ENCODE measurements at regions of chr3 and their contacts with region 1.

Region 1: DNA sequence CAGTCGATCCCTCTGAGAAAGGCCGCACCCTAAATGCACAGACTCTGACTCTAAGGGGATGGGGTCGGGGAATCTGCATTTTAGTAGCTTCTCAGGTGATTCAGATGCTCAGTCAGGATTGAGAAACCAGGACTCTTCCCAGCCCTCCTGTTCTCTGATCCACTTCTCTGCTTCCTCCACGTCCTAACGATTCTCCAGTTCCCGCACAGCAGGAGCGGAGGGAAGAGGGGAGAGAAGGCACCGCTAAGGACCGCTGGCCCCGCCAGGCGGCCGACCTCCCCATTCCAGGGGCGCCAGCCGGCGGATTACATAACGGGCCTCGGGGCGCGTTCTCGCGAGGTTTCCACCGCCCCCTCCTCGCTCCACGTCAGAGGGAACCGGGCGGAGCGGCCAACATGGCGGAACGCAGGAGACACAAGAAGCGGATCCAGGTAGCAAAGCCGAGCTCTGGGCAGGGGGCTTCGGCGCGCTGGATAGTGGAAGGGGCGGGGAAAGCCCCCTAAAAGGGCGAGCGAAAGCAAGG is at the start of gene SEC62:
- DNase-seq: peak; percentile 92
- ATAC-seq: peak; percentile 89
- H3K4me3 ChIP-seq: peak within 1 kb of the TSS; percentile 75
- H3K27ac ChIP-seq: peak within 1 kb of the TSS; percentile 15
- H3K4me1 ChIP-seq: peaks cover 15% of the 10 kb centered on the region
- H3K27me3 ChIP-seq: no peaks in the 10 kb centered on the region
- CTCF ChIP-seq: peak; percentile 53
- total RNA-seq, gene SEC62: 29.0 and 31.8 TPM in 2 replicates

Region 2: DNA sequence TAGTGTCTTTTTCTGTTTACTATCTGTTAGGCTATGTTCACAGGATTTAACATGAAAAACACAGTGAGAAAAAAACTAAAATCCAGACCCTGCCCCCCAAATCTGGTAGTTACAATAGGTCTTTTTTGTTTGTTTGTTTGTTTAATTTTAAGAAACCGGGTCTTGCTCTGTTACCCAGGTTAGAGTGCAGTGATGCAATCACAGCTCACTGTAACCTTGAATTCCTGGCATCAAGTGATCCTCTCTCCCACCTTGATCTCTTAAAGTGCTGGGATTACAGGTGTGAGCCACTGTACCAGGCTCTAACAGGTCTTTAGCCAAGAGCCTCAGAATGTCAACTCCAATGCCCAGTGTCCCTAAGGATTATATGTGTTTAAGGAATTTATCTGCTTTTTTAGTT is 1782.7 kb before region 1 on chr3:
- CTCF ChIA-PET with region 1: no interaction called
- POLR2A ChIA-PET with region 1: interaction called, 20 read pairs
- intact Hi-C with region 1: no loop called
- DNase-seq: no peak
- ATAC-seq: no peak
- H3K4me3 ChIP-seq: no peak overlapping the region
- H3K27ac ChIP-seq: no peak overlapping the region
- H3K4me1 ChIP-seq: no peaks in the 10 kb centered on the region
- H3K27me3 ChIP-seq: no peaks in the 10 kb centered on the region
- CTCF ChIP-seq: no peak

Region 3: DNA sequence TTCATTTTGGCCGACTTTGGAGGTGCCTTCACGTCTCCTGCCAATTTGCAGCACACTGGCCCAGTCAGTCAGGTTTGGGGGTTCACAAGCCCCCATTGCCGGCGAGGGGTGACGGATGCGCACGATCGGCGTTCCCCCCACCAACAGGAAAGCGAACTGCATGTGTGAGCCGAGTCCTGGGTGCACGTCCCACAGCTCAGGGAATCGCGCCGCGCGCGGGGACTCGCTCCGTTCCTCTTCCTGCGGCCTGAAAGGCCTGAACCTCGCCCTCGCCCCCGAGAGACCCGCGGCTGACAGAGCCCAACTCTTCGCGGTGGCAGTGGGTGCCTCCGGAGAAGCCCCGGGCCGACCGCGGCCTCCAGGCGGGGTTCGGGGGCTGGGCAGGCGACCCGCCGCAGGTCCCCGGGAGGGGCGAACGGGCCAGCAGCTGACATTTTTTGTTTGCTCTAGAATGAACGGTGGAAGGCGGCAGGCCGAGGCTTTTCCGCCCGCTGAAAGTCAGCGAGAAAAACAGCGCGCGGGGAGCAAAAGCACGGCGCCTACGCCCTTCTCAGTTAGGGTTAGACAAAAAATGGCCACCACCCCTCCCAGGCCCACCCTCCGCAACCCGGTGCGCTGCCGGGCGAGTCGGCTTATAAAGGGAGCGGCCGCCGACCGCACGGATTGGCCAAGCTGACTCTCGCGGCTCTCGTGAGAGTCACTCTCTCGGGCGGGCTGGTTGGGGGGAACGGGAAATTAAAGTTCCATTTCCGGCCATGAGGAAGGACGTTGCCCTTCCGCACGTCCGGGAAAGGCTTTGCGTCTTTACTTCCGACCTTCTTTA is 201.8 kb before region 1 on chr3 and contains the start of gene TERC:
- CTCF ChIA-PET with region 1: no interaction called
- POLR2A ChIA-PET with region 1: no interaction called
- intact Hi-C with region 1: loop called (anchors 2 kb)
- DNase-seq: peak; percentile 97
- ATAC-seq: peak; percentile 85
- H3K4me3 ChIP-seq: peak within 1 kb of the TSS; percentile 81
- H3K27ac ChIP-seq: peak within 1 kb of the TSS; percentile 82
- H3K4me1 ChIP-seq: peaks cover 9% of the 10 kb centered on the region
- H3K27me3 ChIP-seq: no peaks in the 10 kb centered on the region
- CTCF ChIP-seq: no peak
- total RNA-seq, gene TERC: 544 and 737 TPM in 2 replicates

Region 4: GRCh38 chr3:169863458-169863899 is 103.0 kb before region 1 on chr3:
- CTCF ChIA-PET with region 1: no interaction called
- POLR2A ChIA-PET with region 1: interaction called, 7 read pairs
- intact Hi-C with region 1: loop called (anchors 1 kb)
- DNase-seq: peak; percentile 92
- ATAC-seq: peak; percentile 89
- H3K4me3 ChIP-seq: no peak overlapping the region
- H3K27ac ChIP-seq: no peak overlapping the region
- H3K4me1 ChIP-seq: no peaks in the 10 kb centered on the region
- H3K27me3 ChIP-seq: no peaks in the 10 kb centered on the region
- CTCF ChIP-seq: peak; percentile 97

Region 5: DNA sequence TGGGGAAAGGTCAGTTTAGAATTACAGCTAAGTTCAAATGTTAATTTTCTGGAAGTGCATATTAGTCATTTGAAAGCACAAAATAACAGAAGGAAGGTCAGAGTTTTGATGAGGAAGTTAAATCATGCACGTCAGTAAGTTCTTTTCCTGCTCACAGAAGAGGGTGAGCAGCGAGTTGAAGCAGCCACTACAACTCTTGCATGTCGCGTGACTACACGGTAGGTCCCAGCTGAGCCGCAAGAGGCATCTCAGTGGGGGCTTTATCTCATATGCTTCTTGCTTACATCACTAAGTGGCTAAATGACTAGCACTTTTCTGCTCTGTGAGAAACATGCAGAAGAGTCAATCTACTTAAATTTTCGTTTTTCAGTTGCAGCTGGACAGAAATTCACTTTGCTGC is 21.2 kb before region 1 on chr3:
- CTCF ChIA-PET with region 1: no interaction called
- POLR2A ChIA-PET with region 1: interaction called, 6 read pairs
- intact Hi-C with region 1: loop called (anchors 2 kb)
- DNase-seq: no peak
- ATAC-seq: no peak
- H3K4me3 ChIP-seq: no peak overlapping the region
- H3K27ac ChIP-seq: no peak overlapping the region
- H3K4me1 ChIP-seq: no peaks in the 10 kb centered on the region
- H3K27me3 ChIP-seq: 0 out of 2 replicates have a peak, but pooled peaks cover 4% of the 10 kb centered on the region
- CTCF ChIP-seq: no peak

Measured in PC-3 (cell line).